Psoas muscle (tissue), 8 donors: ENCODE measurements at regions of chr1 and their contacts with region 1.

Region 1: DNA sequence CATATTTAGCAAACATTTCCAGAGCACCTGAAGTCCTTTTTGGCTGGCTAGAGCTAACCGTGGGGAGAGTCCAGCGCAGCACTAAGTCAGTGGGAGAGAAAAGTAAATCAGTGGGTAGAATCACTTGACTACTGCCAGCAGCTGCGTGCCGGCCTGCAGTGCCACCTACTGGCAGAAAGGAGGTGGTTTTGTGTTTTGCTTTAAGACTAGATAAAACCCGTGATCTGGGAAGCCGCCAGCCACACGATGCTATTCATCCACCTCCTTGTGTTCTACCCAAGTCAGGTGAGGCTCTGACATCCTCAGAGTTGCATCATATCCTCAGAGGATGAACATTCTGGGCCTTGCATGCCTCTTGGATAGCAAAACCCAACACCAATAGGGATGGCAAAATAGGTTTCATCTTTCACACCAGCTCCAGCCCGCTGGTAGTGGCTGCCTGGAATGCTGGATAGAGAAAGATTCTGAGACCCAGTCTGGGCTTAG is 14.1 kb upstream of the HEYL start:
- DNase-seq: peak; percentile 85 to 92
- ATAC-seq: peak; percentile 77 to 87 (median 82)
- H3K4me3 ChIP-seq: no peak overlapping the region
- H3K27ac ChIP-seq: peak overlapping the region; percentile 41
- H3K4me1 ChIP-seq: peaks cover 14% of the 10 kb centered on the region
- H3K27me3 ChIP-seq: no peaks in the 10 kb centered on the region
- CTCF ChIP-seq: peak; percentile 94

Region 2: DNA sequence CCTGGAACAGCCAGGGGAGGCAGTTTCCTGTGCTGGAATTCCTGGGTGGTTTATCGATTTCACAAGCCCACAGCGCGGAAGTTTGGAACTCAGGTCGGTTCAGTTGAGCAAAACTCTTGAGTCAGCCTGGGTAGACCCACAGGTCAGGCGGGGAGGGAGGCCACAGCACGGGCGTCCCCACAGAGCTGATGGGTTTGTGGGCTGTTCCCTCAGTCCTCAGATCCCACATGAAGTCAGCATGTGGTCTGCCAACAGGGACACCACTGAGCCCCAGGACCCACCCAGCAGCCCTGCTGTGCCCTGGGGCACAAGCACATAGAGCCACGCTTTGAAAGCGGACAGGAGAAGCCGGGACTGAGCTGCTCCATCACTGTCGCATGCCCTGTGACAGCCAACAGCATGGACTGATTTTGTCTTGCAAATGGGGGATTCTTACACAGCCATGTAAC is 144.7 kb before region 1 on chr1:
- intact Hi-C with region 1: no loop called
- DNase-seq: no peak
- ATAC-seq: no peak
- H3K4me3 ChIP-seq: no peak overlapping the region
- H3K27ac ChIP-seq: no peak overlapping the region
- H3K4me1 ChIP-seq: no peaks in the 10 kb centered on the region
- H3K27me3 ChIP-seq: no peaks in the 10 kb centered on the region
- CTCF ChIP-seq: no peak

Region 3: GRCh38 chr1:39672551-39672947 is 19.0 kb after region 1 on chr1:
- intact Hi-C with region 1: no loop called
- DNase-seq: no peak
- ATAC-seq: peak; percentile 17 to 63 (median 38)
- H3K4me3 ChIP-seq: peak overlapping the region; percentile 73
- H3K27ac ChIP-seq: peak overlapping the region; percentile 89
- H3K4me1 ChIP-seq: peaks cover 69% of the 10 kb centered on the region
- H3K27me3 ChIP-seq: no peaks in the 10 kb centered on the region
- CTCF ChIP-seq: peak; percentile 45

Region 4: DNA sequence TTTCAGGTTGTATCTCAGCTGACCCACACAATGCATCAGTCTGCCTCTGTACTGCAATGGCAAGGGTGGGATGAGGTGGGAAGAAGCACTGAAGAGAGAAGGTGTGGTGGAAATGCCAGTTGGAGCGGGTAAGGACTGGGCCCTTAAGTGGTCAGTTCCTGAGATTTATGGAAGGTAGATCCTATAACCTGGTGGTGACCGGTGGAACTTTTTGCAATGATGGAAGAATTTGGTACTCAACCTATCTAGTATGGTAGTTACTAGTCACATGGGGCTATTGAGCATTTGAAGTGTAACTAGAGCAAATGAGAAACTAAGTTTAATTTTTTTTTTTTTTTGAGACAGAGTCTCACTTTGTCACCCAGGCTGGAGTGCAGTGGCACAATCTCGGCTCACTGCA is 45.8 kb after region 1 on chr1:
- intact Hi-C with region 1: loop called in 1 of 2 experiments (anchors 5 kb)
- DNase-seq: no peak
- ATAC-seq: no peak
- H3K4me3 ChIP-seq: no peak overlapping the region
- H3K27ac ChIP-seq: no peak overlapping the region
- H3K4me1 ChIP-seq: peaks cover 21% of the 10 kb centered on the region
- H3K27me3 ChIP-seq: no peaks in the 10 kb centered on the region
- CTCF ChIP-seq: no peak

Region 5: GRCh38 chr1:39720094-39720999 is 66.8 kb after region 1 on chr1:
- intact Hi-C with region 1: loop called (anchors 5 kb)
- DNase-seq: no peak
- ATAC-seq: peak; percentile 91 to 97 (median 96)
- H3K4me3 ChIP-seq: no peak overlapping the region
- H3K27ac ChIP-seq: peak overlapping the region; percentile 62
- H3K4me1 ChIP-seq: no peaks in the 10 kb centered on the region
- H3K27me3 ChIP-seq: peaks cover 0 to 3% (median 0%) of the 10 kb centered on the region in 3 donors
- CTCF ChIP-seq: peak; percentile 72